ENCODE measurements at regions of chr20 and their contacts with region 1.

Region 1: DNA sequence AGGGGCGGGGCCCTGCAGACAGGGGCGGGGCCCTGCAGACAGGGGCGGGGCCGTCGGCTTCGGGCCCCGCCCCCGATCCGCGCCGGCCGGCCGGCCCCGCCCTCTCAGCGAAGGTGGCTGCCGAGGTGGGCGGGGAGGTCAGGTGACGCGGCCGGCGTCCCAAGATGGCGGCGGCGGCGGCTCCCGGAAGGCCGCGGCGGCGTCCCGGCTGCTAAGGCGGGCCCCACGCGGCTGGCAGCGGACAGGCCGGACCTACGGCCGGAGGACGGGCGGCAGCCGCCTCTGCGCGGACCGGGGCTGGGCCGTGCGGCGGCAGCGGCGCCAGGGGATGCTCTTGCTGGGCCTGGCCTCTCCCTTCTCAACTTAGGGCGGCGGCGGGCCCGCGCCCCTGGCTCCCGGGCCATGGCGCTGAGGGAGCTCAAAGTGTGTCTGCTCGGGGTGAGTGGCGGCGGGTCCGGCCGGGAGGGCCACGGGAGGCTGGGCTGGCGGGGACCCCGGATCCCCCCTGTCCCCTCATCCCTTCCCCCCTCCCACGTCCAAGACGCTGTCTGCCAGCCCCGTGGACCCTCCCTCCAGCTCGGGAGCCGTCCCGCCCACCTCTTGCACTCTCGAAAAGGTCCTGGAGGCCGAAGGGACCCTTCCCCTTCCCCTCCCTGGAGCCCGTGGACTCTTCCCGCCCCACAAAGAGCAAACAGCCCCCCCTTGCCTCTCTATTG is at the start of gene RAB22A:
- DNase-seq: peak; percentile 88
- H3K4me3 ChIP-seq: peak within 1 kb of the TSS; percentile 94
- H3K27ac ChIP-seq: peak within 1 kb of the TSS; percentile 59
- H3K4me1 ChIP-seq: peaks cover 25% of the 10 kb centered on the region
- CTCF ChIP-seq: no peak
- total RNA-seq, gene RAB22A: 6.8 and 7.0 TPM in 2 replicates

Region 2: DNA sequence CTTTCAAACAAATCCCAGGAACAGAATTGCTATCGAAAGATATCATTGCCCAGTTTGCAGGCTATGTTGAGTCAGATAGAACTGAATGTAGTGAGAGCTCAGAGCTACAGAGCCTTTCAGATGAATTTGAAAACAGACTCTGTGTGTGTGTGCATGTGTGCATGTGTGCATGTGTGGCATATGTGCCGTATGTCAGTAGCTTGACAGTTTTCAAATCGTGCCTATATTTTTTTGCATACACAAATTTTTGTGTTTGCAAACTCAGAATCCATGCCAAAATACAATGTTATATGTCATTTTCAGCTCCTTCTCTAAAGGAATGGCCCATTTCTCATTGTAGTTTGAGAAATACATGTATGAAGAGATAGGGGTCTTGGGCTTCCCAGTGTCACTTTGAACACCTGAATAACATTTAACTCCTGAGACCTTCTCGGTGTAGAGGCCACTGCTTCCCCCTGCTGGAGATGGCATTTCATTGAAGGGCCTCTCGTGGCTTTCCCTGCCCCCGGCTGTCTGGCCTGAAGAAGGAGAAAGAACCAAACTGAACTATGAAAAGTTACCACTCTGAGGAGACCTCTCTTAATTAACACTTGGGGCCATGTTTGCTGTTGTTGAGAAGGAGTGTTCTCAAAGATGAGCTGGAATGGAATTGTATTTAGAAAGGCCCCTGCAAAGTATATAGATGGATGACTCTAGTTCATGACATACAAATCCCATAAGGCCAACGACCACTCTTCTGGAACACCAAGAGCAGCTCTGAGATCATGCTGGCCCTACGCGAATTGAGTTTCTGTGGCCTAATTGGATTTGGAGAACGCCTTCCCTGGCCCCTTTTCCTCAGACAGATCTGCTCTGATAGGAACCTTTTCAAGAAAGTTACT is 138.0 kb after region 1 on chr20:
- CTCF ChIA-PET with region 1: no interaction called
- POLR2A ChIA-PET with region 1: no interaction called
- intact Hi-C with region 1: loop called (anchors 10 kb)
- DNase-seq: peak; percentile 61
- H3K4me3 ChIP-seq: no peak overlapping the region
- H3K27ac ChIP-seq: no peak overlapping the region
- H3K4me1 ChIP-seq: no peaks in the 10 kb centered on the region
- CTCF ChIP-seq: peak; percentile 79

Measured in OCI-LY7 (cell line).